Common myeloid progenitor, CD34-positive (primary cell): ENCODE measurements at regions of chr12 and their contacts with region 1.

Region 1: DNA sequence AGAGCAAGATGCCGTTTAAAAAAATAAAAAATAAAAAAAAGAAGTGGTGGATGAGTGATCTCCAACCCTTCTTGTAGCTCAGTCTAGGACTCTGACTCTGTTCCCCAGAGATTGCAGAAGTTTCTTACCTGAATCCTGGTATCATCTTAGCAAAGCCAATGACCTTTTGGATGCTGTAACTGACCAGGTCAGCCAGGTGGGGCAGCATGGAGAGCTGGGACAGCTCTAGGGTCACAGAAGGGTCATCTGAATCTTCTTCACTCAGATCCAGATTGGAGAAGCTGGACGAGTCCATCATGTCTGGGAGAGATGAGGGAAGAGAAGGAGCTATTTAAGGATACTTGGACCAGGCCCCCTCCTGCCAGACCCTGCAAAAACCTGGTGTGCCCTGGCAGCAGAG is 35.8 kb upstream of the HDAC7 start:
- DNase-seq: no peak
- H3K4me3 ChIP-seq: no peak overlapping the region
- H3K27ac ChIP-seq: no peak overlapping the region
- H3K4me1 ChIP-seq: no peaks in the 10 kb centered on the region
- H3K27me3 ChIP-seq: no peaks in the 10 kb centered on the region

Region 2: DNA sequence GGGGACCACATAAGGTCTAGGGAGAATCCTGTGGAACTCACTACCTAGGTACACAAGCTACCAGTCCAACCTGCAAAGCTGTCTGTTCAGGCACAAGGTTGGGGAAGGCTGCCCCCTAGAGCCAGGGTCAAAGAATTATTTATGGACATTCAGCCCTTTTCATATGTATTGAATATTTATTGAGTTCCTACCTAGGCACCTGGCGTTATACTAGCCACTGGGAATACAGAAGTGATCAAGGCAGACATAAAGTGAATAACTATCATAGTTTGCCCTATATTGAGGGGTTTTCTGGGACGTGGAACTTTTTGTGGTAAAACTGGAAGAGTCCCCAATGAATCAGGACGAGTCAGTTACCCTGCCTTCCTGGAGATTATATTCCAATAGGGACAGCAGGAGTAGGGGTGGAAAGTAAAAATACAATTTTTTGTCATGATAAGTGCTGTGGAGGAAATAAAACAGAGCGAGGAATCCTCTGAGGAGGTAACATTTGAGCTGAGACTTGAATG is 88.2 kb before region 1 on chr12:
- CTCF ChIA-PET with region 1: no interaction called
- POLR2A ChIA-PET with region 1: no interaction called
- DNase-seq: peak; percentile 75 to 86 (median 80)
- H3K4me3 ChIP-seq: no peak overlapping the region
- H3K27ac ChIP-seq: no peak overlapping the region
- H3K4me1 ChIP-seq: peaks cover 4 to 44% (median 26%) of the 10 kb centered on the region in 4 experiments
- H3K27me3 ChIP-seq: no peaks in the 10 kb centered on the region

Region 3: GRCh38 chr12:47870175-47870781 is 14.8 kb after region 1 on chr12:
- CTCF ChIA-PET with region 1: interaction called, 15 read pairs
- POLR2A ChIA-PET with region 1: no interaction called
- DNase-seq: peak in 1 of 3 donors; percentile 39
- H3K4me3 ChIP-seq: no peak overlapping the region
- H3K27ac ChIP-seq: no peak overlapping the region
- H3K4me1 ChIP-seq: peaks cover 0 to 20% (median 15%) of the 10 kb centered on the region in 4 experiments
- H3K27me3 ChIP-seq: no peaks in the 10 kb centered on the region

Region 4: GRCh38 chr12:48329199-48329939 is 473.9 kb after region 1 on chr12:
- CTCF ChIA-PET with region 1: no interaction called
- POLR2A ChIA-PET with region 1: no interaction called
- DNase-seq: no peak
- H3K4me3 ChIP-seq: no peak overlapping the region
- H3K27ac ChIP-seq: no peak overlapping the region
- H3K4me1 ChIP-seq: no peaks in the 10 kb centered on the region
- H3K27me3 ChIP-seq: peaks cover 0 to 5% (median 0%) of the 10 kb centered on the region in 5 experiments